AG04450 (cell line): ENCODE measurements at regions of chr5 and their contacts with region 1.

Region 1: DNA sequence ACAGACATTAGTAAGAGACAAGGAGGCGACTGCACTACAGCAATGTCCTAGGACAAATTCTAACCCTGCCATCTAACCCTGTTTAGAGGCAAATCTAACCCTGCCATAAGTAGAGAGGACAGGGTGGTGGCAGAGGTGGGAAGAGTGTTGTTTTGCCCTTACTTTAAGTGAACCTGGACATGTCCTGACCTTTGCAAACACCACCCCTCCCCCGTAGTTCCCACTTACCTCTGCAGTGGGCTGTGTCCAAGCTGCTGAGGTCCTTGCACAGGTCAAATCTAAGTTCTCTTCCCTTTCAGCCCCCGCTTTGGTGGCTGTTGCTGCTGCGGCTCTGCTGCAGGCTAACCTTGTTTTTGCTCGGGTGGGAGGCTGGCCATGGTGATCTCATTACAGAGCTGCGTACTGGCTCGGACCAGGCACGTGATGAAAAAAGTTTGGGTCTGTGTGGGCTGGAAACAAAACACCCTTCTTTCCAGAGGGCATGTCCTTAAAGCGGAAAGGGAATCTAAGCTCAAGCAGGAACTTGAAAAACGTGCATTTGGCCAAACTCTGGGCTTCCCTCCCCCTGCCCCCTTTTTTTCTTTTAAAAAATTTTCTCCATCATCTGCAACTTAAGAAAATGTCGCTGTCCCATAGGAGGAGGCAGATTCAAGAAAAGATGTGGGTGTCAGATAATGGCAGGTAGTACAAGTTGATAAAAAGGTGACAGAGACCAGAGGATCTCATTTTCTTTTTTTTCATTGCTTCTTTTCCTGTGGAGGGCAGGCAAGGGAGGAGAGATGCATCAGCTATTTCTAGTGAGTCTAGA is at the start of gene FAXDC2:
- DNase-seq: peak; percentile 69
- H3K4me3 ChIP-seq: peak within 1 kb of the TSS; percentile 92
- H3K27ac ChIP-seq: peak within 1 kb of the TSS; percentile 78
- H3K27me3 ChIP-seq: no peaks in the 10 kb centered on the region
- CTCF ChIP-seq: no peak
- polyA plus RNA-seq, gene FAXDC2: 21.1 and 22.7 TPM in 2 replicates

Region 2: DNA sequence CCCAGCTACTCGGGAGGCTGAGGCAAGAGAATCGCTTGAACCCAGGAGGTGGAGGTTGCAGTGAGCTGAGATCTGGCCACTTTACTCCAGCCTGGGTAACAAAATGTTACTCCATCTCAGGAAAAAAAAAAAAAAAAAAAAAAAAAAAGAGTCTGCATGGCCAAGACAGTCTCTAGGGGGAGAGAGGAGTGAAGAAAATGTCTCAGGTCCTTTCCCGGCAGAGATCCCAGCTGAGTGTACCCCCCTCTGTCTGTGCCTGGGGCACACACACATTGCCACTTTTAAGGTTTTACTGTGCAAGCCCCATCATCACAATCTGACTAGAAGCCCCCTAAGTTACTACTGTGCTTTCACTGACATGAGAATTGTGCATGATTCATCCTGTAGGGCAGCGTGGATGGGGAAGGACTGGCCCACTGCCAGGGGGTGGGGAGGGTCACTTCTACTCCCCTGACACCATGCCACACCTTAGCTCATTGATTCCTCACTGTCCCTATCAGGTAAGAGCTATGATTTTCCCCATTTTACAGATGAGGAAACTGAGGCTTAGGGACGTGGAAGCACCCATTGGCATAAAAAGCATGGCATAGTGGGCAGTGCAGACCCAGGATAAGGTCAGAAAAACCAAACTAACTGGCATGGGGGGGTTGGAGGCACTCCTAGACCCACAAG is 197.6 kb before region 1 on chr5:
- CTCF ChIA-PET with region 1: interaction called, 12 read pairs
- POLR2A ChIA-PET with region 1: no interaction called
- DNase-seq: no peak
- H3K4me3 ChIP-seq: no peak overlapping the region
- H3K27ac ChIP-seq: no peak overlapping the region
- H3K27me3 ChIP-seq: no peaks in the 10 kb centered on the region
- CTCF ChIP-seq: peak; percentile 19; the same call in 1 of the 2 replicates

Region 3: DNA sequence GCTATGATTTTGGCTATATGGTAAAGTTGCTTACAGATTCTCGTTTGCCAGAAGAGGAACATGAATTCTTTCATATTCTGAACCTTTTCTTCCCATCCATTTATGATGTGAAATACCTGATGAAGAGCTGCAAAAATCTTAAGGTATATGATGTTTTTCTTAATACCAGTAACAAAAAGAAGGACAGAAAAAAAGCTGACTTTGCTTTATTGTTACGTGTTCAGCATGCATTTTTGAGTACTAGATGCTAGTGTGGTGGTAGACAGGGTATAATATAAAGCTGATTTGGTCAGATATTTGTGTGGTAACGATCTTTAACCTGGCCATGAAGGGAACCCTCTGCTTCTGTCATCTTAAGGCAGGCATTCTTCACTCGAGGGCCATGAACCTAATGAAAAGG is 21.3 kb after region 1 on chr5:
- CTCF ChIA-PET with region 1: no interaction called
- POLR2A ChIA-PET with region 1: no interaction called
- DNase-seq: no peak
- H3K4me3 ChIP-seq: no peak overlapping the region
- H3K27ac ChIP-seq: no peak overlapping the region
- H3K27me3 ChIP-seq: no peaks in the 10 kb centered on the region
- CTCF ChIP-seq: no peak

Region 4: DNA sequence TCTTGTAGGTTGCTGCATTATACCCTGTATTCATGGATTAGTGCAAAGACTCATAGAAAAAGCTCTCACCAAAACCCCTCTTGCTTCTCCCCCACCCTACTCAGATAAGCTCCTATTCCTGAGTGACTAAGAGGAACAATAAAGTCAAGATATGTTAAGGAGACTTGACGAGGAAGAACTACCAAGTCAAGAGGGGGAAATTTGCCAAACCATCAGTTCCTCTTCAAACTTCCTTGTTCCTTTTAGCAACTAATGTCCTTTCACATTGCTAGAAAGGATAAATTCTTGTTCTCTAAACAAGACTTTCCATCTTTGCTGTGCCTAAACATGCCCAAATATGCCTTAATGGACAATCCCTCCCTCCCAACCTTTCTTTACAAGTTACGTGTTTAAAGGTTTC is 35.0 kb after region 1 on chr5:
- CTCF ChIA-PET with region 1: no interaction called
- POLR2A ChIA-PET with region 1: no interaction called
- DNase-seq: no peak
- H3K4me3 ChIP-seq: no peak overlapping the region
- H3K27ac ChIP-seq: no peak overlapping the region
- H3K27me3 ChIP-seq: no peaks in the 10 kb centered on the region
- CTCF ChIP-seq: no peak

Region 5: GRCh38 chr5:155053501-155053900 is 203.0 kb after region 1 on chr5:
- CTCF ChIA-PET with region 1: no interaction called
- POLR2A ChIA-PET with region 1: no interaction called
- DNase-seq: no peak
- H3K4me3 ChIP-seq: no peak overlapping the region
- H3K27ac ChIP-seq: no peak overlapping the region
- H3K27me3 ChIP-seq: no peaks in the 10 kb centered on the region
- CTCF ChIP-seq: no peak